ENCODE measurements at regions of chr4 and their contacts with region 1.

Region 1: DNA sequence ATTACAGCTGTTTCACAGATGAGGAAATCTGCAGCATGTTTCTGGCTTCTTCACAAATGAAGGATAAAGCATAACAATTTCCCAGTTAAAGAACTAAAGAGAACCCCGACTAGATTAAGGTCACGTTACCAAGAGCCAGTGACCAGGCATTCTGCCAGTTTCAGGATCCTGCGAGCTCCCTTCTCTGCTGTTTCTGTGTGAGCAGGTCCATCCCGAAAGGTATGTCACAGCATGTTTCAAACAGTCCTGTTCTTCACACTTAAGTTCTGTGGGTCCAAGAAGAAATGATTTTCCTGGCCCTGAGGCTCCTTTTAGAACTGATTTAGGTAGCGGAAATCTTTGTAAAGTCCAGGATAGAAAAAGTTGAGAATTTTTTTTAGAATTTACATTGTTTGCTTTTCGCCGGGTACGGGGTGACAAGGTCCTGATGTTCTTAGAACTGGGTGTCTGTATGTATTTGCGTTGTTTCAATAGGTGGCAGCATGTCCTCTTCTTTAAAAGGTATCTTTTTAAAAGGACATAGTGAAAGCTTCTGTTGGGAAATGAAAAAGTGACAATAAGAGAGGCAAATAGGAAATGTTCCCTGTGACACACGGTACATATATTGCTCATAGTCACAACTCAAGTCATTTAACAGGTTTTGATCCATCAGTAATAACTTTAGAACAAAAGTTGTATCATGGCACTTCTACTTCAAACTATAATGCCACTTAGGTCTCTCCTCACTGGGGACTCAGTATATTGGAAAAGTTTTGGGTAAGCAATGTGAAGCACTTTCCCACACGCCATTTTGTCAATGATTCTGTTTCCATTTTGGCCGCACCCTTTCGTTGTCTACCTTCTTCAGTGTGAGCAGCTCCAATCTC is 18.4 kb downstream of the IL21 start:
- DNase-seq: no peak

Region 2: GRCh38 chr4:122700178-122700725 is 97.7 kb after region 1 on chr4:
- intact Hi-C with region 1: loop called in 1 of 2 experiments (anchors 10 kb)
- DNase-seq: no peak

Region 3: GRCh38 chr4:122716825-122717448 is 114.4 kb after region 1 on chr4:
- intact Hi-C with region 1: loop called in 1 of 2 experiments (anchors 10 kb)
- DNase-seq: no peak

Region 4: DNA sequence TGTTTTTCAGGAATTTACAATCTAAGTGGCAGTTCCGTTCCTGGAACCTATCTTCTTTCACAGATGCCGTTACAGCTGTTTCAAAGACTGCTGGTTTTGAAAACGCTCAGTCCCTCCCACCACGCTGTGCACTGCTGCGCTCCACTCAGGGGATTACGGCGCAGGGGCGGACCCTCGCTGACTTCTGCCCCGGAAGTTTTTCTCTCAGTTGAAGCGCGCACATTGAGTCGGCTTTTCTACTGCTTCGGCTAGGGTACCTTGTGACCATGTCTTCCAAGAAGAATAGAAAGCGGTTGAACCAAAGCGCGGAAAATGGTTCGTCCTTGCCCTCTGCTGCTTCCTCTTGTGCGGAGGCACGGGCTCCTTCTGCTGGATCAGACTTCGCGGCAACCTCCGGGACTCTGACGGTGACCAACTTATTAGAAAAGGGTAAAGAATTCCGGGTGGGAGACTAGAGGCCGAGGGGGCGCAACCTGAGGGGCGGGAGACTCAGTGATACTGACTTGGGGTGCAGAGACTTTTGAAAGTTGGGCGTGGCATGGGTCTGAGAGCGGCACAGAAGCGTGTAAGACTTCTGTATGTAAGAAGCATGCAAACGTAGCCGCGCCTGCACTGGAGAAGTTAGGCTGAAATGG is 320.5 kb after region 1 on chr4:
- intact Hi-C with region 1: loop called in 1 of 2 experiments (anchors 10 kb)
- DNase-seq: peak; percentile 94

Measured in posterior vena cava (tissue), 2 donors.